ENCODE measurements at regions of chr4 and their contacts with region 1.

Region 1: DNA sequence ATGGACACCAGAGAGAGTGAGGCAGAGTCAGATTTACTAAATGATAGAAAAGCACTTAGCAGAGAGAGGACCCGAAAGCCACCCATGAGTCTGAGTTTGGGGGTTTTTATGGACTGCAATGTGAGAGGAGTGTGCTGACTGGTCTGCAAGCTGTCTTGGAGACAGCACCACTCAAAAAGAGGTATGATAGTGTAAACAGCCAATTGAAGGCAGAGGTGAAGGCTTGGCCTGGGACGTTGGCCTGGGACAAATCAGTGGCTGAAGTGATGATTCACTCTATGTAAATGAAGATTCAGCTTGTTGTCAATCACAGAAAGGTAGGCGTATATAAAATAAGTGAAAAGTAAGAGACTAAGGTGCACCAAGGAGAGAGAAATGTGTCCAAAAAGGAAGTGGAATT is 217.6 kb upstream of the ZFP42 start:
- DNase-seq: no peak
- H3K4me3 Mint-ChIP-seq: no peak overlapping the region
- H3K27ac Mint-ChIP-seq: no peak overlapping the region
- H3K4me1 Mint-ChIP-seq: no peaks in the 10 kb centered on the region
- H3K27me3 Mint-ChIP-seq: no peaks in the 10 kb centered on the region

Region 2: DNA sequence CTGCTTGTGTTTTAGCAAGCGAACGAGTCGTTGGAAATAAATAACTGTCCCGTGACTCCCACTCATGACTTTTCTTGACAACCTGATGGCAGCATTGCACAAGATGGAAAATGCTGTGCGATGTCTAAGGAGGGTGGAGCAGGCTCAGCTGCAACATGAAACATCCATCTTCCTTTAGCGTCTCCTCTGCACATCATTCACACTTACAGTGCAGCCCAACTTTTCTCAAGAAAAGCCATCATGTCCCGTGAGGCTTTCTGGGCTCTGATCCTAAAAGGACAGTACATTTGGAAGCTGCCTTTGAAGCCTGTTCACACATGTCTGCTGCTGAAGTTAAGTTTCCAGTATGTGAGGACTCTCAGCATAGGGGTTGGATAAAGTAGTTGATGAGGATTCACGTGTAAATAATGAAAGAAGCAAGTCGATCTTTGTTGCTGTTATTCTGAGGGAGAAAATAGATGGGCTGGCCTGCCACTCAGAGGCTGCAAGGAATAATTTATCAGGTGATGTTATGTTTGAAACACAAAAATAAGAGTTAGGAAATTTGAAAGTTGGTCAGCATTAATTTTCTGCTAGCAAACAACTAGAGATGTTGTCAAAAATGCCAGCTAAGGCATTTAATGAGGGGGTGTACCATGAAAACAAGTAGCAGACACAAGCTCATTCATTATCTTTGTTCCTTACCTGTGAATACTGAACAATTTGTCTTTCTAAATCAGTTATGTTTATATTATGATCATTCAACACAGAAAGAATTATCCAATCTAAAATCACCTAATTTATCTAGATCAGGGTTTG is 111.1 kb before region 1 on chr4:
- intact Hi-C with region 1: no loop called
- DNase-seq: no peak
- H3K4me3 Mint-ChIP-seq: no peak overlapping the region
- H3K27ac Mint-ChIP-seq: no peak overlapping the region
- H3K4me1 Mint-ChIP-seq: no peaks in the 10 kb centered on the region
- H3K27me3 Mint-ChIP-seq: no peaks in the 10 kb centered on the region

Region 3: GRCh38 chr4:187732524-187732923 is 45.4 kb before region 1 on chr4:
- intact Hi-C with region 1: loop called (anchors 1 kb)
- DNase-seq: no peak
- H3K4me3 Mint-ChIP-seq: no peak overlapping the region
- H3K27ac Mint-ChIP-seq: no peak overlapping the region
- H3K4me1 Mint-ChIP-seq: no peaks in the 10 kb centered on the region
- H3K27me3 Mint-ChIP-seq: no peaks in the 10 kb centered on the region